ENCODE measurements at regions of chr13 and their contacts with region 1.

Region 1: DNA sequence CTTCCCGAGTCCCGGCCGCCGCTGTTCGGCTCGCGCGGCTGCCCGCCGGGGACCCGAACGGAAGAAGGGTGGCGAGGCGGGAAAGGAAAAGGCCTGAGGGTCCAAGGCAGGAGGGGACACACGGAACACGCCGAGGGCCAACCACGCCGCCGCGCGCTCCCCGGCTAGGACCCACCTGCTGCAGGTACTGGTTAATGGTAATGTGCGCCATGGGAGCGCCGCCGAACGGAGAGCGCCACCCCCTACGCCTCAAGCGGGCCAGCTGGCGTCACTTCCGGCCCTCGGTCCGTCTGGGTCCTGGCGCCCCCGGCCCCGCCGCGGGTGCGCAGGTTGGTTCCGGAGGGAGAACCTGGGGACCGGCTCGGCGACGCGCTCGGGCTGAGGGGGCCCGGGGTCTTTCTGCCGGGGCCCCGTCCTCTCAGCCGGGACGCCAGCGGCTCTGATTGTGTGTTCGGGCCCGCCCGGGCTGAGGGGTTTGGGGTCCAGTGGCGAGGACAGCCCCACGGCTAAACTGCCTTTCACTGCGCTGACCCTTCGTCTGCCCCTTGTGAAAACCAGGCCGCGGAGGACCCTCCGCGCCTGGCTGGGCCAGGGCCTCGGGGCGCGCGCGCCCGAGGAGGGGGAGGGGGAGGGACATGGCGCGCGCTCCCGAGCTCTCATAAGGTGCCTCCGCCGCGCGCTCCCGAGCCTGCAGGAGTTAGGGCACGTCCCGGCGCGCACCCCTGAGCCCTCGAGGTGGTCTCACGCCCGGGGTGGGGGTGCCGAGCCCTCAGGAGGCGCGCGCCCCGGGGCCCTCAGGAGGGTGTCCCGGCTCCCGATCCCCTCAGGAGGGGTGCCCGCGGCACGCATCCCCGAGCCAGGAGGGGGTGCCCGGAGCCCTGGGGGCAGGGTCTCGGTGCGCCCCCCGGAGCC is at the start of gene PCID2:
- DNase-seq: no peak
- H3K4me3 ChIP-seq: peak within 1 kb of the TSS; percentile 95
- H3K27ac ChIP-seq: peak within 1 kb of the TSS; percentile 95
- H3K27me3 ChIP-seq: no peaks in the 10 kb centered on the region
- CTCF ChIP-seq: no peak
- polyA plus RNA-seq, gene PCID2: 97.2 and 107 TPM in 2 replicates

Region 2: DNA sequence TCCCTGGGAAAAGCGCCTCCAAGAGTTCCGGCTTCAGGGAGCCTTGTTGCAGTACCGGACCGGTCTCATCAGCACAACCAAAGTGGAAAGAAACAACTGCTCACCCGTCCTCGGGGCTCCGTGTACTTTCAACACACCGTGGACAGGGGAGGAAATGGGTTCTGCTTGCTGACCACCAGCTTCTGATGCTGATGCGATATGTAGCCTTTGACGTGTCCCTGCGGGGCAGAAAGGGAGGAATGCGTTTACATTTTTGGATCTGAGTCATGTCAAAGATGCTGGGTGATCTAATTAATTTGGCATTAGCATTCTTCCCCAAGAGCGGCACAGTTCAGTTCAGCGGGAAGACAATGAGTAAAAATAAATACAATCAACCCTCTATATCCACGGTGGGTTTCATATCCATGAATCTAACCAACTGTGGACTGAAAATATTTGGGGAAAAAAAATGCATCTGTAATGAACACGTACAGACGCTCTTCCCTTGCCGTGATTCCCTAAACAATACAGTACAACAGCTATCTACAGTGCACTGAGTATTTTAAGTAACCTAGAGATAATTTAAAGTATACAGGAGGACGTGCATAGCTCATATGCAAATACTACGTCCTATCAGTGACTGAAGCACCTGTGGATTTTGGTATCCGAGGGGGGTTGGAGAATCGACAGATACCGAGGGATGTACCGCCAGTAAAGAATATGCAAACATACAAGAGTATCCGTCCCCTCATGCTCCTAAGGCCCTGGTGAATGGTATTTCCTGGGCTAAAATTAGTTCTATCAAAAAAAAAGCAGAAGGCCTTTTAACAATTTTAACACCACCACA is 30.4 kb before region 1 on chr13:
- CTCF ChIA-PET with region 1: no interaction called
- POLR2A ChIA-PET with region 1: interaction called, 18 read pairs
- DNase-seq: peak; percentile 97
- H3K4me3 ChIP-seq: peak overlapping the region; percentile 55
- H3K27ac ChIP-seq: peak overlapping the region; percentile 99
- H3K27me3 ChIP-seq: no peaks in the 10 kb centered on the region
- CTCF ChIP-seq: no peak

Region 3: DNA sequence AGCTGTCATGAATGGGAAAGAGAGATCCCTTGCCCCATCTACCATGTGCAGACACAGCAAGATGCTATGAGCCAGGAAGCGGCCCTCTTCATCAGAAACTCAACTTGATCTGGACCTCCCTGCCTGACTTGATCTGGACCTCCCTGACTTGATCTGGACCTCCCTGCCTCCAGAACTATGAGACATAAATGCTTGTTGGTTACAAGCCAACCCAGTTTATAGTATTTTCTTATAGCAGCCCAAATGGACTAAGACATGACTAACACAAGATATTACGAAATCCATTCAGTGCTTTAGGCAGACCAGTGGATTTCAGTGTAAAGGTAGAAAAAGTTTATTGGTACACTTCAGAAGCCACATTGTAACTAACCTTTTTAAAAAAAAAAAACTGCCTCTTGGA is 15.8 kb before region 1 on chr13:
- CTCF ChIA-PET with region 1: interaction called, 3 read pairs
- POLR2A ChIA-PET with region 1: interaction called, 10 read pairs
- DNase-seq: no peak
- H3K4me3 ChIP-seq: no peak overlapping the region
- H3K27ac ChIP-seq: no peak overlapping the region
- H3K27me3 ChIP-seq: no peaks in the 10 kb centered on the region
- CTCF ChIP-seq: no peak

Region 4: GRCh38 chr13:113288880-113289279 is 80.2 kb after region 1 on chr13:
- CTCF ChIA-PET with region 1: no interaction called
- POLR2A ChIA-PET with region 1: no interaction called
- DNase-seq: no peak
- H3K4me3 ChIP-seq: no peak overlapping the region
- H3K27ac ChIP-seq: no peak overlapping the region
- H3K27me3 ChIP-seq: peaks cover 16% of the 10 kb centered on the region
- CTCF ChIP-seq: no peak